ENCODE measurements at regions of chr5 and their contacts with region 1.

Region 1: GRCh38 chr5:80487829-80488721 is at the start of gene FAM151B:
- DNase-seq: peak; percentile 91
- H3K4me3 ChIP-seq: peak within 1 kb of the TSS; percentile 41 to 73 (median 56)
- H3K27ac ChIP-seq: peak within 1 kb of the TSS; percentile 81 to 93 (median 86)
- H3K4me1 ChIP-seq: peaks cover 0 to 17% (median 11%) of the 10 kb centered on the region in 4 donors
- H3K27me3 ChIP-seq: no peaks in the 10 kb centered on the region
- CTCF ChIP-seq: no peak
- EP300 ChIP-seq: no peak
- POLR2A ChIP-seq: peak; percentile 69
- total RNA-seq, gene FAM151B: 1.1 to 4.1 (median 3.8) TPM in 3 of 4 donors, not detected in the other

Region 2: DNA sequence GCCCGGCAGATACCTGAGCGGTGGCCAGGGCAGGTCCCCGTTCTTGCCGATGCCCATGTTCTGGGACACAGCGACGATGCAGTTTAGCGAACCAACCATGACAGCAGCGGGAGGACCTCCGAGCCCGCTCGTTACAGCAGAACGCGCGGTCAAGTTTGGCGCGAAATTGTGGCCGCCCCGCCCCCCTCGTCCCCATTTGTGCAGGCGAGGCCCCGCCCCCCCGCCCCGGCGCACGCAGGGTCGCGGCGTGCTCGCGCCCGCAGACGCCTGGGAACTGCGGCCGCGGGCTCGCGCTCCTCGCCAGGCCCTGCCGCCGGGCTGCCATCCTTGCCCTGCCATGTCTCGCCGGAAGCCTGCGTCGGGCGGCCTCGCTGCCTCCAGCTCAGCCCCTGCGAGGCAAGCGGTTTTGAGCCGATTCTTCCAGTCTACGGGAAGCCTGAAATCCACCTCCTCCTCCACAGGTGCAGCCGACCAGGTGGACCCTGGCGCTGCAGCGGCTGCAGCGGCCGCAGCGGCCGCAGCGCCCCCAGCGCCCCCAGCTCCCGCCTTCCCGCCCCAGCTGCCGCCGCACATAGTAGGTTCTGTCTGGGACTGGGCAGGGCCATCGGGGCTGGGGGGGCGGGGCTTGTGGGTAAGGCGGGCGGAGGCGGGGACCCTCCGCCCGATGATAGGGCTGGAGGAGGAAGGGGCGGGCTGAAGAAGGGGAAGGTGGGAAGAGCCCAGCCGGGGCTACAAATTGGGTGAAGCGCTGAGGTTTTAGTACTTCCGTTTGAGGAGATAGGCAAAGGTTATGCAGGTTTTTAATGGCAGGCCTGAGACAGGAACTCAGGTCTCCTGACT is 166.5 kb after region 1 on chr5 and contains the starts of genes DHFR and MSH3:
- in situ Hi-C with region 1: loop called in 3 of 4 experiments (anchors 25 kb)
- intact Hi-C with region 1: no loop called
- DNase-seq: peak; percentile 90
- H3K4me3 ChIP-seq: peak within 1 kb of the TSS; percentile 59 to 99 (median 76)
- H3K27ac ChIP-seq: peak within 1 kb of the TSS; percentile 92 to 99 (median 98)
- H3K4me1 ChIP-seq: peaks cover 10 to 32% (median 15%) of the 10 kb centered on the region in 4 donors
- H3K27me3 ChIP-seq: no peaks in the 10 kb centered on the region
- CTCF ChIP-seq: peak in 4 of 5 experiments; percentile 16 to 48 (median 36)
- EP300 ChIP-seq: no peak
- POLR2A ChIP-seq: peak; percentile 76
- total RNA-seq, gene DHFR: 12.7 to 31.4 (median 26.8) TPM
- total RNA-seq, gene MSH3: 6.4 to 22.2 (median 17.2) TPM

Region 3: DNA sequence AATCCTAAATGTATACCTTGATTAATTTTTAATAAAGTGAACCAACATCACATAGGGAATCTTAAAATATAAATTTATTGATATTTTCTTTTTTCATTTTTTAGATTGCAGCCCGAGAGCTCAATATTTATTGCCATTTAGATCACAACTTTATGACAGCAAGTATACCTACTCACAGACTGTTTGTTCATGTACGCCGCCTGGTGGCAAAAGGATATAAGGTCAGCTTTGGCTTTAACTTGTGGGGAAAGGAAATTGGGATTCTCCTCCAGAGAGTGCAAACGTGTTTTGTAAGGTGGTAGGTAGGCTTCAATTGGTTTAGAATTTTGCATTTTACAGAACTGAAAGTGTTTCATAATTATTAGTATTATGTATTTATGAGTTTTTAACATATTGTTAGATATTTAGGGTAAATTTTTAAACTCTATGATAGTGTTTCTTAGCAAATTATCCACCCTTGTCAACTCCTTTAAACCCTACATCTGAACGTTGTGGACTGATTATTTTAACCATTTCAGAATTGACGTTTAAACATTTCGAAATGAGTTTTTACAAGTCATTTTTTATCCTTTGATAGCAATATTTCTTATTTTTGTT is 184.2 kb after region 1 on chr5:
- in situ Hi-C with region 1: loop called (anchors 10 to 25 kb)
- intact Hi-C with region 1: no loop called
- DNase-seq: peak; percentile 79
- H3K4me3 ChIP-seq: no peak overlapping the region
- H3K27ac ChIP-seq: no peak overlapping the region
- H3K4me1 ChIP-seq: no peaks in the 10 kb centered on the region
- H3K27me3 ChIP-seq: no peaks in the 10 kb centered on the region
- CTCF ChIP-seq: peak; percentile 80 to 86 (median 84)
- EP300 ChIP-seq: no peak
- POLR2A ChIP-seq: no peak

Region 4: DNA sequence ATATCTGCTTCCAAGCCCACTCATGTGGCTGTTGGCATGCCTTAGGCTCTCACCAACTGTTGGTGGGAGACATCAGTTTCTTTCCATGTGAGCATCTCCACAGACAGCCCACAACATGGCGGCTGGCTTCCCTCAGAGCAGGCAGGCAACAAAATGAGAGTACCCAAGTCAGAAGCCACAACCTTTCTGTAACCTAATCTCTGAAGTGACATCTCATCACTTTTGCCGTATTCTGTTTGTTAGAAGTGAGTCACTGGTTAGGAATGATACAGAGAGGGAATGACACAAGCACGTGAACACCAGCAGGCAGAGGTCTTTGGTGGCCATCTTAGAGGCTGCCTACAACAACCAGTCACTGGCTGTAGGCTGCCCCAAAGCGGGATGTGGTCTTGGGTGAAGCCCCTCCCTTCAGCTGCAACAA is 383.5 kb after region 1 on chr5:
- in situ Hi-C with region 1: no loop called
- intact Hi-C with region 1: no loop called
- DNase-seq: no peak
- H3K4me3 ChIP-seq: no peak overlapping the region
- H3K27ac ChIP-seq: no peak overlapping the region
- H3K4me1 ChIP-seq: no peaks in the 10 kb centered on the region
- H3K27me3 ChIP-seq: no peaks in the 10 kb centered on the region
- CTCF ChIP-seq: no peak
- EP300 ChIP-seq: no peak
- POLR2A ChIP-seq: no peak

Measured in transverse colon (tissue), 4 donors.